ENCODE measurements at regions of chrX and their contacts with region 1.

Region 1: DNA sequence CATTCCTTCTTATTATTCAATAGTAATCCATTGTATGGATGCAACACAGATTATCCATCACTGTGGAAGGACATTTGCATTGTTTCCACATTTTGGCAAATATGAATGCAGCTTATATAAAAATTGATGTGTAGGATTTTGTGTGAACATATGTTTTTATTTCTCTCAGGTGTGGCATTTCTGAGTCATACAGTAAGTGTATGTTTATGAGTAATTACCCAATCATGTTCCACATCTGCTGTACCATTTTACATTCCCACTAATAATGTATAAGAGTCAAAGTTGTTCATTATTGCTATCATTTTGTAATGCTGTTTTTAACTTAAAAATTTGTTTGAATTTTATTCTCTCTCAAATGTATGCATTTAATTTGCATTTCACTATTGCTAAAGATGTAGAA is 25.5 kb downstream of the MAGEA4 start:
- DNase-seq: no peak

Region 2: DNA sequence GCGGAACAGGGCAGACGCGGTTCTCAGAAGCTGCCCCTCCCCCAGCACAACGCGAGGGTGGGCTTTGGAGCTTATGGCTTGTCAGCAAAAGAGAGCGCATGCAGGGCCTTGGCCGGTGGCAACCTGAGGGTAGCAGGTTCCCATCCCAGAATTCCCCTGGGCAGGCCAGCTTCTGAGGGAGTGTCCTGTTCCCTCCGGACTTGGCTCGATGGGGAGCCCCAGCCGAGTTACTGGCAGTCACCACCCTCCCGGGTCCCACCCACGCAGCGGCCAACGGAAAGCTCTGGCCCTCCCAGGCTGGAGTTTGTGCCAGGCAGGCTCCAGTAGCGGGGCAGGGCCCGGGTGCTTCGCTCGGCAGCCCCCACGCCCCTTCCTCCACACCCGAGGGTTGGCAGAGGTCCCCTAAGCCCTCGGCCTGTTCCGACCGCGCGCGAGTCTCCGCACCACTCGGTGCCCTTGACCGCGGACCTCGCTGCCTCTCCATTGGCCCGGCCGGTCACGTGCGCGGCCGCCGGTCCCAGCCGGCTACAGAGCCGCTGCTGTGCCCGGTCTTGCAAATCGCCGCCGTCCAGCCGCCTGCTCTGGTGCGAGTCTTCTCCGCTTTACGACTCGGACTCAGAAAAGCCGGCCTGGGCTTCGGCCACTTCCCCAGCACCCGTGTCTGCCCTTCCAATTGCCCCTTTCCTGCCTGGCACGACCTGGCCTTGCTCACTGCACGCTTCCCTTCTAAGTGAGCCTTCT is 1390.6 kb before region 1 on chrX:
- intact Hi-C with region 1: loop called in 1 of 2 experiments (anchors 10 kb)
- DNase-seq: peak; percentile 93